ENCODE measurements at regions of chr17 and their contacts with region 1.

Region 1: DNA sequence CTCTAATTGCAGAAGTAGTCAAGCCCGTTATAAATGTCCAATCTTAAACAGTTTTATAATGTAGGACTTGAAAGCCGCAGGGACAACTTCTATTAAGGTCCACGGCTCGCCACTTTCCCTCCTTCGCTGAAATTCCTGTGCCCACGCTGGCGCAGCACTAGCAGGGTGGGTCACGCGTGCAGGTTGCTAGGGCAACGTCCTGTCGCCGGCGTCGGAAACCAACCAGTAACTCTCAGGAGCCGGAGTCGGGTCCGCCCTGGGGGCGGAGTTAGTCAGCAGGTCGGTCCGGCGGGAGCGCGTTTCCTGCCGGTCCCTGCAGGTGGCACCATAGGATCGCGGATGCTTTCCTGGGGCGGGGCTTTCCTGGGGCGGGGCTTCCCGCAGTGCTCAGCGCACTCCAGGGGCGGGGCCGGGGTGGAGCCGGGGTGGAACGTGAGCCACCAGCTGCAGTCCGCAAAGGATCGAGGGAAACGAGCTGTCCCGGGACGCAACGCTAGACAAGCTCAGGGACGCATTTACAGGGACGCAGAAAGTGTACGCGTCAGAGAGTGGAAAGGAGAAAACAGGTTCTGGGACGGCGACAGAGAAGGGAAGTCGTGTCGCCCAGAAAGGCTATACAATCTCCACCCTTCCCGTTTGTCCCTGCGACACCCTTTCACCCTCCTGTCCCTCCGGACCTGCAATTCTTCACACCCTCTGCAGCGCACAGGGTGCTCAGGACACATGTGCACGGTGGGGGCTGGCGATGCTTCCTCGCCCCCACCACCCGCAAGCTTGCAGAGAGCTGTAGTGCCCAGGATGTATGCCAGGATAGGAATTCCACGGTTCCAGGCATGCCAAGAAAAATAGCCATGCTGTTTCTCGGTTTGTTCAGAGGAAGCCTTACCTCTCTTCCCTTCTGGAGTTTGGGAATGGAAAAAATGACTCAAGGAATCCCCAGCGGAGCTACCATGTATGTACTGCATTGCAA is 12.4 kb downstream of the COPZ2 start:
- DNase-seq: peak; percentile 97
- H3K4me3 ChIP-seq: peak overlapping the region; percentile 50 to 78
- H3K27ac ChIP-seq: peak overlapping the region; percentile 43 to 68
- H3K4me1 ChIP-seq: peaks cover 25 to 33% of the 10 kb centered on the region in 2 experiments; a peak in 3 of 4 replicates
- H3K27me3 ChIP-seq: no peaks in the 10 kb centered on the region
- CTCF ChIP-seq: peak; percentile 90
- EP300 ChIP-seq: no peak
- RAD21 ChIP-seq: peak; percentile 98

Region 2: GRCh38 chr17:47862621-47863440 is 162.4 kb before region 1 on chr17:
- CTCF ChIA-PET with region 1: no interaction called
- POLR2A ChIA-PET with region 1: no interaction called
- DNase-seq: no peak
- H3K4me3 ChIP-seq: no peak overlapping the region
- H3K27ac ChIP-seq: peak overlapping the region in 1 of 2 experiments; percentile 10; a peak in 1 of 4 replicates
- H3K4me1 ChIP-seq: peaks cover 0 to 5% of the 10 kb centered on the region in 2 experiments; a peak in 1 of 4 replicates
- H3K27me3 ChIP-seq: 0 out of 2 replicates have a peak, but pooled peaks cover 16% of the 10 kb centered on the region
- CTCF ChIP-seq: no peak
- EP300 ChIP-seq: peak in 1 of 2 experiments; percentile 43; a peak in 1 of 4 replicates
- RAD21 ChIP-seq: no peak

Region 3: GRCh38 chr17:47905221-47905781 is 119.9 kb before region 1 on chr17:
- CTCF ChIA-PET with region 1: no interaction called
- POLR2A ChIA-PET with region 1: no interaction called
- DNase-seq: no peak
- H3K4me3 ChIP-seq: no peak overlapping the region
- H3K27ac ChIP-seq: peak overlapping the region; percentile 58 to 66
- H3K4me1 ChIP-seq: peaks cover 3 to 8% of the 10 kb centered on the region in 2 experiments; a peak in 2 of 4 replicates
- H3K27me3 ChIP-seq: no peaks in the 10 kb centered on the region
- CTCF ChIP-seq: no peak
- EP300 ChIP-seq: no peak
- RAD21 ChIP-seq: no peak

Region 4: GRCh38 chr17:47949136-47949759 is 76.0 kb before region 1 on chr17:
- CTCF ChIA-PET with region 1: interaction called, 496 read pairs
- POLR2A ChIA-PET with region 1: no interaction called
- DNase-seq: peak; percentile 90
- H3K4me3 ChIP-seq: peak overlapping the region; percentile 28 to 29
- H3K27ac ChIP-seq: peak overlapping the region; percentile 29 to 75; a peak in 3 of 4 replicates
- H3K4me1 ChIP-seq: peaks cover 4 to 11% of the 10 kb centered on the region in 2 experiments; a peak in 3 of 4 replicates
- H3K27me3 ChIP-seq: no peaks in the 10 kb centered on the region
- CTCF ChIP-seq: peak; percentile 100
- EP300 ChIP-seq: no peak
- RAD21 ChIP-seq: peak; percentile 91

Region 5: GRCh38 chr17:48037036-48037837 is 12.0 kb after region 1 on chr17 and contains the start of gene COPZ2:
- CTCF ChIA-PET with region 1: interaction called, 1,200 read pairs
- POLR2A ChIA-PET with region 1: interaction called, 8 read pairs
- DNase-seq: peak; percentile 85
- H3K4me3 ChIP-seq: peak within 1 kb of the TSS; percentile 53 to 63
- H3K27ac ChIP-seq: peak within 1 kb of the TSS in 1 of 2 experiments; percentile 1; a peak in 1 of 4 replicates
- H3K4me1 ChIP-seq: peaks cover 5 to 14% of the 10 kb centered on the region in 2 experiments; a peak in 2 of 4 replicates
- H3K27me3 ChIP-seq: no peaks in the 10 kb centered on the region
- CTCF ChIP-seq: peak; percentile 69
- EP300 ChIP-seq: no peak
- RAD21 ChIP-seq: peak; percentile 13; the same call in 1 of the 2 replicates
- polyA plus RNA-seq, gene COPZ2: 31.2 and 36.9 TPM in 2 replicates

Region 6: GRCh38 chr17:48093341-48094045 is 68.3 kb after region 1 on chr17:
- CTCF ChIA-PET with region 1: interaction called, 64 read pairs
- POLR2A ChIA-PET with region 1: no interaction called
- DNase-seq: no peak
- H3K4me3 ChIP-seq: no peak overlapping the region
- H3K27ac ChIP-seq: no peak overlapping the region
- H3K4me1 ChIP-seq: no peaks in the 10 kb centered on the region
- H3K27me3 ChIP-seq: no peaks in the 10 kb centered on the region
- CTCF ChIP-seq: no peak
- EP300 ChIP-seq: no peak
- RAD21 ChIP-seq: no peak

Region 7: GRCh38 chr17:48113201-48113676 is 88.0 kb after region 1 on chr17:
- CTCF ChIA-PET with region 1: interaction called, 46 read pairs
- POLR2A ChIA-PET with region 1: no interaction called
- DNase-seq: no peak
- H3K4me3 ChIP-seq: no peak overlapping the region
- H3K27ac ChIP-seq: no peak overlapping the region
- H3K4me1 ChIP-seq: peaks cover 4 to 7% of the 10 kb centered on the region in 2 experiments; a peak in 3 of 4 replicates
- H3K27me3 ChIP-seq: no peaks in the 10 kb centered on the region
- CTCF ChIP-seq: no peak
- EP300 ChIP-seq: no peak
- RAD21 ChIP-seq: no peak

Region 8: DNA sequence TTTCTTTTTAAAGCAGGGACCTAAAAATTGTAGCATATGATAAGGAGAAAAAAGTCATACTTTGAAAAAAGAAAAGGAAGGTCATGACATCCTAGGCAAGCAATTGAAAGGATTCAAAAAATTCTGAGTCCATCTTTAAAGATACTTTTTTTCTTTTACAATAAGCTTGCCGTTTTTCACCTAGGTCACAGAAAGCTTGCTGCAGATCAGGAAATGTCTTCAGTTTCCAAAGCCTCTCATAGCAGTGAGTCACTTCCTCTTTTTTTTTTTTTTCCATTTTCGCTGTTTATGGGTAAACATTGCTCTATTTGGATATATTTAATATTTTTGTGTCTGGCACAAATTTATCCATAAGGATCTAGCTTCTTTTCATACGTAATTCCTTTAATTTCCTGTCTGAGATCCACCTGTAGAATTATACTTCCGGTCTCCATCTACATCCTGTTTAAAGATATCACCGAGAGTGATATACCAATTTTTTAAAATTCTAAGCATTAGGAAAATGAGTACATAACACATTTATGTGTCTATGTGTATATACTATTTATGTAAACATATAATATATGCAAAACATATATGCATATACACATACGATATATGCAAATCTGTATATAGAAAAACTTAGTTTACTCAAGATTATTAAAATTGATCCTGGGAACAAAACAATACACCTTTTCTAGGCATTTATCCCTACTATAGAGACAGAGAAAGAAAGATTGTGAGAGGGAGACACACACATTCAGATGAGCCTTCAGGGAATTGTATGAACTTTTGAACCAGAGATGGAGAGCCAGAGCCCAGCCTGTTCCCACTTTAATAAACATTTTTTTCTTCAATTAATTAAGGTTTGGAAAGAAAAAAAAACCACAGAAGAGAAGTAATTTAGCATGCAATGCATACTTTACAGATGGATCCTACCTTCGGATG is 270.4 kb after region 1 on chr17:
- CTCF ChIA-PET with region 1: no interaction called
- POLR2A ChIA-PET with region 1: no interaction called
- DNase-seq: no peak
- H3K4me3 ChIP-seq: no peak overlapping the region
- H3K27ac ChIP-seq: no peak overlapping the region
- H3K4me1 ChIP-seq: no peaks in the 10 kb centered on the region; a peak in 1 of 4 replicates
- H3K27me3 ChIP-seq: peaks cover 57% of the 10 kb centered on the region
- CTCF ChIP-seq: no peak
- EP300 ChIP-seq: no peak
- RAD21 ChIP-seq: no peak

Region 9: GRCh38 chr17:48618256-48618897 is 593.2 kb after region 1 on chr17:
- CTCF ChIA-PET with region 1: interaction called, 16 read pairs
- POLR2A ChIA-PET with region 1: no interaction called
- DNase-seq: peak; percentile 98
- H3K4me3 ChIP-seq: no peak overlapping the region
- H3K27ac ChIP-seq: no peak overlapping the region
- H3K4me1 ChIP-seq: no peaks in the 10 kb centered on the region
- H3K27me3 ChIP-seq: peaks cover 100% of the 10 kb centered on the region
- CTCF ChIP-seq: peak; percentile 100
- EP300 ChIP-seq: no peak
- RAD21 ChIP-seq: peak; percentile 97